GM10248 (cell line): ENCODE measurements at regions of chr15 and their contacts with region 1.

Region 1: DNA sequence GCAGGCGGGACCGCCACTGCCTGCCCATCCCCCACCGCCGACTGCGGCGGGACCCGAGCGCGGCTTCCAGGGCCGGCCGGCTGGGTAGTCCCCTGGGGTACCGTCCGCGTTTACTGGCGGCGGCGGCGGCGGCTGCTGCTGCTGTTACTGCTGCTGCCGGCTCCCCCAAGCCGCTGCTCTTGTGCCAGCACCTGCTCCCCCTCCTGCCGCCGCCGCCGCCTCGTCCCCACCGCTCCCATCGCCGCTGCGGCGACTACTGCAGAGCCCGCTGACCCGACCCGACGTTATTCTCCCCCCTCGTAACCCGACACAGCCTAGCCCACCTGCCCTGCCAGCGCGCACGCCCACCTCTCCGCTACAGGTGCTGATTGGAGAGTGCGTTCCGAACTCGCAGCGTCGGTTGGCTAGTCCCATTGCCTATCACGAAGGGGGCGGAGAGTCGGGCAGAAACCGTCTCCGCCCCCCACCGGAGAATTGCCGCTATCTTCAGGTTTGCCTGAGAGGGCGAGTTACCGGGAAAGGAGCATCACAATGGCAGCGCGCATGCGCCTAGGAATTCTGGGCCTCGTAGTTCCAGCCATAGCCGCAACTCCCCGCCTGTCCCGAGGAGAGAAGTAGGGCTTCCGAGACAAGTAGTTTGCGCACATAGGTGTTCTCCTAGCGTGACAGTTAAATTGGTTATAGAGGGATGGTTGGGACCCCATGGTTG is at the start of gene TTBK2:
- DNase-seq: peak; percentile 95
- CTCF ChIP-seq: no peak

Region 2: GRCh38 chr15:42704492-42704926 is 216.2 kb before region 1 on chr15:
- CTCF ChIA-PET with region 1: interaction called, 45 read pairs
- POLR2A ChIA-PET with region 1: no interaction called
- DNase-seq: peak; percentile 75
- CTCF ChIP-seq: peak; percentile 60

Region 3: DNA sequence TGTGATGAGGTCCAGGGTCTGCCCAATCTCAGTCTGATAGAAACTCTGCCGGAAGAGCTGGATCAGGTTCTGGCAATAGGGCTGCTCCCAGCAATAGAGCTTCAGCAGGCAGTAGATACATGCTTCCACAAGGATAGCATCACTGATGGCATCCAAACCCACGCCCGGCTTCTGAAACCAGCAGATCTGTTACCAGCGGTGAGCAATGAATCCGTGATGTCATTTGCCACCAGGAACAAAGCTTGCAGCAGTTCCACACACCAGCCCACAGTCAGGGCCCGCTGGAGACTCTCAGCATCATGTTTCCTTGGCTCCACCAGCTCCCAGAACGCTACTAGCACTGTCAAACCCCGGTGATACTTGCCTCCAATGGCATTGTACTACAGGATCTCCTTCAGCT is 19.2 kb after region 1 on chr15:
- CTCF ChIA-PET with region 1: interaction called, 11 read pairs
- POLR2A ChIA-PET with region 1: no interaction called
- DNase-seq: no peak
- CTCF ChIP-seq: no peak

Region 4: GRCh38 chr15:43056696-43057095 is 136.0 kb after region 1 on chr15:
- CTCF ChIA-PET with region 1: no interaction called
- POLR2A ChIA-PET with region 1: no interaction called
- DNase-seq: no peak
- CTCF ChIP-seq: no peak